WTC11 (cell line): ENCODE measurements at regions of chr10 and their contacts with region 1.

Region 1: GRCh38 chr10:101889256-101890210 is 45.9 kb upstream of the KCNIP2 start:
- DNase-seq: peak; percentile 90
- ATAC-seq: peak; percentile 91
- H3K4me3 Mint-ChIP-seq: no peak overlapping the region
- H3K27ac Mint-ChIP-seq: no peak overlapping the region
- H3K4me1 Mint-ChIP-seq: no peaks in the 10 kb centered on the region
- H3K27me3 Mint-ChIP-seq: no peaks in the 10 kb centered on the region
- CTCF ChIP-seq: peak; percentile 75; the same call in 1 of the 2 replicates

Region 2: DNA sequence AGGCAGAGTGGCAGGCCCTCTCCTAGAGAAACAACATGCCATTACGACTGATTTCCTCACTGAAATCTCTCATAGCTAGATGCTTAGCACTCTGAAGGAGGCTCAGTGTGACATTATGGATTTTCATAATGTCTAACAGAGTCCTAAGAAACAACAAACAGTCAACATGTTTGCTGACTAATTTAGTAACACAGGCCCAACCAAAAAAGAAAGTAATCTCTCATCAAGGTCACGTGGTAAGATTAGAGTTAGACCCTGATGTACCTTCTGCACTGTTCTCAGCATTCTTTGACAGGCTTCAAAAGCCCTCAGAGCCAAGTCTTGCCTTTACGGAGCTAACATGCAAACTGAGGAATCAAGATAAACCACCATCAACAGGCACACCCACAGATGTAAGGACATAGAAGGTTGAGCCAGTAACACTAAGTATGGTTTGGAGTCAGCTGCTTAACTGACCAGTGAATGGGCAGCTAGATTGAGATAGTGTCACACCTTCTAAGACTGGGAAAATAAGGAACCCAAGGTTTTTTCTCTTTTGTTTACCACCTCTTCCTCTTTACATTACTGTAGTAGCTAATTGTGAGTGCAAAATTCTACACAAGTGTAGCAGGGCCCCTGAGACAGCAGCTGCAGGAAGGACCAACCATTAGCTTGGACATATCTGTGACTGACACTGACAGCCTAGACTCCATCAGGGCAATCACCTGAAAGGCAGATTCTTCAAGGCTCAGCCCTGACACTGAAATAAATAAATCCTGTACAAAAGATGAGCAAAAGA is 30.6 kb before region 1 on chr10:
- CTCF ChIA-PET with region 1: interaction called, 11 read pairs
- POLR2A ChIA-PET with region 1: no interaction called
- DNase-seq: no peak
- ATAC-seq: no peak
- H3K4me3 Mint-ChIP-seq: no peak overlapping the region
- H3K27ac Mint-ChIP-seq: no peak overlapping the region
- H3K4me1 Mint-ChIP-seq: no peaks in the 10 kb centered on the region
- H3K27me3 Mint-ChIP-seq: no peaks in the 10 kb centered on the region; the same call in 1 of the 2 replicates
- CTCF ChIP-seq: no peak

Region 3: GRCh38 chr10:101903827-101904550 is 14.5 kb after region 1 on chr10:
- CTCF ChIA-PET with region 1: interaction called, 39 read pairs
- POLR2A ChIA-PET with region 1: no interaction called
- DNase-seq: no peak
- ATAC-seq: no peak
- H3K4me3 Mint-ChIP-seq: no peak overlapping the region
- H3K27ac Mint-ChIP-seq: peak overlapping the region; percentile 35; the same call in 1 of the 2 replicates
- H3K4me1 Mint-ChIP-seq: peaks cover 44% of the 10 kb centered on the region
- H3K27me3 Mint-ChIP-seq: no peaks in the 10 kb centered on the region
- CTCF ChIP-seq: no peak

Region 4: DNA sequence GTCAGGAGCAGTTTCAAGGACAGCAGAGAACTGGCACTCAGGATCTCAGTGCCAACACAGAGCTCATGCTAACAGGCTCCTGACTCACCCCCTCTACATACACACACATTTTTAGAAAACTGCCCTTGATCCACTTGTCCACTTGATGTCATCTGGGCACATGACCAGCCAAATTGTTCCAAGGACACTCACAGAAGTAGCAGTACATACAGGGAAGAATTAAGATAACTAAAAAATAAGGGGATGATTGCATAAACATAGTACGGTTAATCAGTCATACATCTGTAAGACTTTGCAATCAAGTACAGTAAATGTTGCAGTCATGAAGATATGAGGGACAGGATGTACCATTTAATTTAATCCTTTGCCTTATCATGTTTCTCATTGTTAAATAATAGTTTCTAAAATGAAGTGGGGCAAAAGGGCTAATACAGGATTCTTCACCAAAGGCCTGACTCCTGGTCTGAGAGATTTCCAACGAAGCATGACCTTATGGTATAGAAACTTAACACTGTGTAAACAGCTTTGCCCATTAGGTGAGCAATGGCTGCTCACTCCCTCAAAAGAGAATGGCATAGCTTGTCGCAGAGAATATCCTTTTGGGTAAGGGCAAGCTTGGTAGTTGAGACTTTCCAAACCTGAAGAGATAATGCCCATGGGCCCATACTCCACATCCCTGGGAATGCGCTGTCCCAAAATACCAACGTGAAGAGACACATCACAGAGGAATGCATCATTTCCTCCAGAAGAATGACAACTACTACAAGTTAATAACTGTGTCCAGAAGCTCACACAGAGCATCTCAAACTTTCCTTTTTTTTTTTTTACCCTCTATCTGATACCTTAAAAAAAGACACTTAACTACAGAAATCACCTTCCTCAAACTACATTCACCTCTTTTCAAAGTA is 72.3 kb after region 1 on chr10:
- CTCF ChIA-PET with region 1: interaction called, 12 read pairs
- POLR2A ChIA-PET with region 1: no interaction called
- DNase-seq: no peak
- ATAC-seq: no peak
- H3K4me3 Mint-ChIP-seq: no peak overlapping the region
- H3K27ac Mint-ChIP-seq: no peak overlapping the region
- H3K4me1 Mint-ChIP-seq: no peaks in the 10 kb centered on the region
- H3K27me3 Mint-ChIP-seq: no peaks in the 10 kb centered on the region
- CTCF ChIP-seq: no peak